Naive thymus-derived CD4-positive, alpha-beta T cell (primary cell): ENCODE measurements at regions of chr7 and their contacts with region 1.

Region 1: DNA sequence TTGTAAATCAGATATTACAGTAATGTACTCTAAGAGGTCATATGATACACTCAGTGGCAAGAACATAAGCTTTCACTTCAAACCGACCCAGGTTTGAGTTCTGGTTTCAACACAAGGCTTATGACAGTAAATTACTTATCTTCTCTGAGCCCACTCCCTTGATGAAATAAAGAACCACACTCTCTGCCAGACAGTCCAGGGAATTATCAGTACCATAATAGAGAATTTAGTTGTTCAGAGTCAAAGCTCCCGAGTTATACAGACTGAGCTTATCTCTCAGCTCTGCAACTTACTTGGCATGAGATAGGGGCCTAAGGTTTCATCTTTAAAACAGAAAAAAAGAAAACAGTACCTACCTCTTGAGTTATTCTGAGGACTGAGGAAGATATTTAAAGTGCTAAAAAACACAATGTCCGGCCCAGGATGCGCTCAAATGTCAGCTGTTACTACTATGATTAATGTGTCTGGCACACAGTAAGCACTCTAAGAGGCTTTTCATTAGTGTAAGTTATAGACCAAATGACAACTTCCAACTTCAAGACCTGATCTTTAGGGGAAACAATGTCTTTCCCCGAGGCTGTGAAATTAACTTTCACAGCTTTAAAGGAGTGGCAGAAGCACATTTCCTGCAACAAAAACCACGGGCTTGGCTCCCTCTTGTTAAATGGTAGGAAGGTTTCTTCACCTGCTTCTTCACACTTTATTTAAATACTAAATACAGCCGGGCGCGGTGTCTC is 38.1 kb downstream of the UBE2H start:
- DNase-seq: peak in 3 of 9 donors; percentile 6 to 16 (median 12)
- ATAC-seq: peak; percentile 51
- H3K4me3 ChIP-seq: no peak overlapping the region
- H3K4me3 Mint-ChIP-seq: peak overlapping the region in 9 of 10 donors; percentile 52 to 66 (median 59)
- H3K27ac ChIP-seq: no peak overlapping the region
- H3K27ac Mint-ChIP-seq: peak overlapping the region in 8 of 9 donors; percentile 58 to 86 (median 70)
- H3K4me1 ChIP-seq: peaks cover 15 to 41% of the 10 kb centered on the region in 2 donors
- H3K4me1 Mint-ChIP-seq: peaks cover 15 to 92% (median 81%) of the 10 kb centered on the region in 7 donors
- H3K27me3 ChIP-seq: no peaks in the 10 kb centered on the region
- H3K27me3 Mint-ChIP-seq: no peaks in the 10 kb centered on the region

Region 2: DNA sequence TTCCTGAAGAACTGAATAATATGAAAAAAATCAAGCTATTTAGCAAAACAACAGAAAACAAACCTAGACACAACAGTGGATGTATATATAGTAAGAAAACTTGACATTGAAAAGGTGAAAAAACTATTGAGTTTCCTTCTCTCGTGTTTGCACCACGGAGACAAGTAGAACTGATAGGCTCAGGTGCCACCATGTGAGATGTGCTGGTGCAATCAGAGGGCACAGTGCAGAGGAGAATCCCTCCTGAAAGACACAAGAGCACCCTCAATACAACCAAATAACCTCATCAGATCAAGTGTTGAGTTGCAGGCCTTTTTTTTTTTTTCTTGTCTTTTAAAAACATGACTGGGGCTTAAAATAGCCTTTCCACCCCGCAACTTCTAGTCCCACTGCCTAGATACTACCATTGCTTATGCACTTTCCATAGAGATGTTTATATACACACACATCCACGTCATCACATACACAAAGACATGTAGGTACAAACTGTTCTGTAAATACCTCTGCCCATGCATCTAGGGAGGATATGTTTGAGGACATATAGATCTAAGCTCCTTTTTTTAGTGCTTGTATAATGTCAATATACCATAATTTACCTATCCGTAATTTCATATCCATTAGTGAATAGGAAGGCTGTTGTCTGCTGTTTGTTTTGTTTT is 16.1 kb before region 1 on chr7:
- CTCF ChIA-PET with region 1: no interaction called
- POLR2A ChIA-PET with region 1: no interaction called
- intact Hi-C with region 1: loop called in 1 of 2 experiments (anchors 2 kb)
- DNase-seq: no peak
- ATAC-seq: no peak
- H3K4me3 ChIP-seq: no peak overlapping the region
- H3K4me3 Mint-ChIP-seq: peak overlapping the region in 4 of 10 donors; percentile 5 to 53 (median 44)
- H3K27ac ChIP-seq: no peak overlapping the region
- H3K27ac Mint-ChIP-seq: peak overlapping the region in 5 of 9 donors; percentile 3 to 48 (median 30)
- H3K4me1 ChIP-seq: peaks cover 0 to 18% of the 10 kb centered on the region in 2 donors
- H3K4me1 Mint-ChIP-seq: peaks cover 8 to 87% (median 69%) of the 10 kb centered on the region in 7 donors
- H3K27me3 ChIP-seq: no peaks in the 10 kb centered on the region
- H3K27me3 Mint-ChIP-seq: no peaks in the 10 kb centered on the region